BJ (cell line): ENCODE measurements at regions of chr3 and their contacts with region 1.

Region 1: GRCh38 chr3:49339945-49340800 is at the start of gene USP4:
- DNase-seq: peak; percentile 48
- H3K4me3 ChIP-seq: peak within 1 kb of the TSS; percentile 95
- H3K27me3 ChIP-seq: no peaks in the 10 kb centered on the region
- CTCF ChIP-seq: peak; percentile 63
- polyA plus RNA-seq, gene USP4: 63.5 and 72.7 TPM in 2 replicates

Region 2: GRCh38 chr3:48507351-48508061 is 832.7 kb before region 1 on chr3:
- CTCF ChIA-PET with region 1: no interaction called
- POLR2A ChIA-PET with region 1: no interaction called
- DNase-seq: no peak
- H3K4me3 ChIP-seq: no peak overlapping the region
- H3K27me3 ChIP-seq: no peaks in the 10 kb centered on the region
- CTCF ChIP-seq: peak; percentile 67

Region 3: DNA sequence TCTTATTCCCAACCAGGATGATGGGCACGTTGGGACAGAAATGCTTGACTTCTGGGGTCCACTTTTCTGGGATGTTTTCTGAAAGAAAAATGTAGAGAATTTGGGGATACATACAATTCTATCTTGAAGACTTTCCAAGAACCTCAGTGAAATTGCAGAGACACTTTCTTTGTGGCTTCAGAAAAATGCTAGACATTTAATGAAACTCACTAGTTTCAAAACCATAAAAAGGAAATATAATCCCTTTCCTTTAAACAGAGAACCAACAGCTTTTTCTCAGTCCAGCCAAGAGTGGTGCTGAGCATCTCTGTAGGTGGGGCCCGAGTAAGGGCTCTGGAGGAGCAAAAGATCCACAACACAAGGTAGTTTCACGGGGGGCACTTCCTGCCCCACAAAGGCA is 22.4 kb after region 1 on chr3:
- CTCF ChIA-PET with region 1: interaction called, 10 read pairs
- POLR2A ChIA-PET with region 1: interaction called, 4 read pairs
- DNase-seq: no peak
- H3K4me3 ChIP-seq: no peak overlapping the region
- H3K27me3 ChIP-seq: no peaks in the 10 kb centered on the region
- CTCF ChIP-seq: no peak

Region 4: GRCh38 chr3:49454458-49454857 is 114.3 kb after region 1 on chr3:
- CTCF ChIA-PET with region 1: interaction called, 24 read pairs
- POLR2A ChIA-PET with region 1: no interaction called
- DNase-seq: no peak
- H3K4me3 ChIP-seq: no peak overlapping the region
- H3K27me3 ChIP-seq: no peaks in the 10 kb centered on the region
- CTCF ChIP-seq: peak; percentile 19; the same call in 1 of the 2 replicates